CD8-positive, alpha-beta T cell (primary cell): ENCODE measurements at regions of chr17 and their contacts with region 1.

Region 1: GRCh38 chr17:3913531-3914311 is 2.5 kb downstream of the P2RX1 start:
- DNase-seq: peak; percentile 70 to 89 (median 83)
- ATAC-seq: peak; percentile 47
- H3K4me3 ChIP-seq: no peak overlapping the region
- H3K4me3 Mint-ChIP-seq: no peak overlapping the region
- H3K27ac ChIP-seq: peak overlapping the region in 1 of 2 experiments; percentile 16
- H3K27ac Mint-ChIP-seq: peak overlapping the region; percentile 50
- H3K4me1 ChIP-seq: peaks cover 59% of the 10 kb centered on the region
- H3K4me1 Mint-ChIP-seq: peaks cover 65% of the 10 kb centered on the region
- H3K27me3 ChIP-seq: no peaks in the 10 kb centered on the region
- H3K27me3 Mint-ChIP-seq: no peaks in the 10 kb centered on the region
- CTCF ChIP-seq: peak; percentile 94

Region 2: DNA sequence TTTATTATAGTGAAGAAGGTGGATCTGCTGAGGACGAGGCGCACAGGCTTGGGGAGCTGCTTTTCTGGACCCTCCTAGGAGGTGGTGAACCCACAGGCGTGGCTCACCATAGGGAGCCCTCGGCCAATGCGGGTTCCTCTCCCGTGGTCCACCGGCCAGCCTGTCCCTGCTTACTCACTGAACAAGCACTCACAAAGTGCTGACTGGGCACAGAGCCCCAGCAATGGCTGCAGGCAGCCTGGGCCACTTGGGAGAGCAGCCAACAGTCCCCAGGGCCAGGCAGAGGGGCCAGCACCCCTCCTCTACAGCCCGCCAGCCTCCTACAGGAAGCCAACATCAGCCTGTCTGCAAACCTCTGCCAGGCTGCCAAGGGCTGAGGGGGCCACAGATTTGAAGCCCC is 48.5 kb before region 1 on chr17:
- CTCF ChIA-PET with region 1: interaction called, 14 read pairs
- POLR2A ChIA-PET with region 1: no interaction called
- intact Hi-C with region 1: loop called (anchors 5 kb)
- DNase-seq: no peak
- ATAC-seq: no peak
- H3K4me3 ChIP-seq: no peak overlapping the region
- H3K4me3 Mint-ChIP-seq: no peak overlapping the region
- H3K27ac ChIP-seq: no peak overlapping the region
- H3K27ac Mint-ChIP-seq: no peak overlapping the region
- H3K4me1 ChIP-seq: no peaks in the 10 kb centered on the region
- H3K4me1 Mint-ChIP-seq: no peaks in the 10 kb centered on the region
- H3K27me3 ChIP-seq: no peaks in the 10 kb centered on the region
- H3K27me3 Mint-ChIP-seq: no peaks in the 10 kb centered on the region
- CTCF ChIP-seq: no peak

Region 3: GRCh38 chr17:3927628-3928340 is 14.1 kb after region 1 on chr17:
- CTCF ChIA-PET with region 1: interaction called, 11 read pairs
- POLR2A ChIA-PET with region 1: no interaction called
- intact Hi-C with region 1: no loop called
- DNase-seq: no peak
- ATAC-seq: no peak
- H3K4me3 ChIP-seq: no peak overlapping the region
- H3K4me3 Mint-ChIP-seq: no peak overlapping the region
- H3K27ac ChIP-seq: no peak overlapping the region
- H3K27ac Mint-ChIP-seq: peak overlapping the region; percentile 52
- H3K4me1 ChIP-seq: no peaks in the 10 kb centered on the region
- H3K4me1 Mint-ChIP-seq: no peaks in the 10 kb centered on the region
- H3K27me3 ChIP-seq: no peaks in the 10 kb centered on the region
- H3K27me3 Mint-ChIP-seq: no peaks in the 10 kb centered on the region
- CTCF ChIP-seq: no peak

Region 4: DNA sequence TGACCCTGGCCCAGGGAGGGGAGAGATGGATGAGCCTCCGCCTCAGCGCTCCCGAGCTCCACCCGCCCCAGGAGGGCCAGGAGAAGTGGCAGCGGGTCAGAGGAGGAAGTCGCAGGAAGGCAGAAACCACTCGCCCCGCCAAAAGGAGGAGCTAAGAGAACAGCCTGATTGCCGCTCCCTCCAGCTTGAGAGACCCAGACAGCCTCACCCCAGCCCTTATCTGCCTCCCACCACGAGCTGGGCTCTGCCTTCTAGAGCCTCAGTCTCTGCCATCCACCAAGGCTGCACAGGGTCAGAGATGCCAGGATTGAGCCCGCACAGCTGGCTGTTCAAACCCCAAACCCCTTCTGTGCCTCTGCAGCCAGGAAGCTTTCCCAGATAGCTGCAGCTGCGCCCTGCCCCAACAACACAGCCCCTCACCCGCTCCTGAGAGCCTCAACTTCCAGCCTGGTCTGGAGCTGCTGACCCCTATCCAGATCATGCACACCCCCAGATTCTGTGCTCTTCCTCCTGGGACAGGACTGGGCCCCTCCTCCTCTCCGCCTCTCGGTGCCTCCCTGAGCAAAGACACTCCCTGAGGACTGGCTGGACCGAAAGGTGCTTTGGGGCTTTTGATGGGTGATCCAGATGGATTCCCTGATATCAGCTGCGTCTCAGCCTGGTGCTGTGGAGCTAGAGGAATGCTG is 51.5 kb after region 1 on chr17:
- CTCF ChIA-PET with region 1: interaction called, 26 read pairs
- POLR2A ChIA-PET with region 1: interaction called, 10 read pairs
- intact Hi-C with region 1: loop called (anchors 1 to 2 kb)
- DNase-seq: peak; percentile 33 to 81 (median 73)
- ATAC-seq: peak; percentile 51
- H3K4me3 ChIP-seq: peak overlapping the region; percentile 71 to 83
- H3K4me3 Mint-ChIP-seq: peak overlapping the region; percentile 91
- H3K27ac ChIP-seq: peak overlapping the region; percentile 76 to 77
- H3K27ac Mint-ChIP-seq: peak overlapping the region; percentile 94
- H3K4me1 ChIP-seq: peaks cover 39% of the 10 kb centered on the region
- H3K4me1 Mint-ChIP-seq: peaks cover 40% of the 10 kb centered on the region
- H3K27me3 ChIP-seq: no peaks in the 10 kb centered on the region
- H3K27me3 Mint-ChIP-seq: no peaks in the 10 kb centered on the region
- CTCF ChIP-seq: no peak

Region 5: DNA sequence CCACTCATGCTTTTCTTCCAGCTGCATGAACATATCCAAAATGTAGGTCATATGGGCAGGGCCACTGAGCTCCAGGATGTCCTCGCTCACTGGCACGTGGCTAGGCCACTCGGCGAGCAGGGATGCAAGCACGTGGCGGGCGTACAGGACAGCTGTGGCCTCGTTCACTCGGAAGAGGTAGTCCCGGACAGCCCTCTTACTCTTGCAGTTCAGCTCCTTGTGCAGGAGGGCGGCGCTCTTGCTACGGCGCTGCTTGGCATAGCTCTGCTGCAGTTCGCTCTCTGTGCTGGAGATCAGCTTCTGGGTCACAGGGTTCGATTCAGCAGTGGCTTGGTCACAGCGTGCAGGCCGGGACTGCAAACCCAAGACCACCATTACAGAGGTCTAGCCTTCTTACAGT is 103.7 kb after region 1 on chr17:
- CTCF ChIA-PET with region 1: interaction called, 181 read pairs
- POLR2A ChIA-PET with region 1: no interaction called
- intact Hi-C with region 1: no loop called
- DNase-seq: no peak
- ATAC-seq: no peak
- H3K4me3 ChIP-seq: no peak overlapping the region
- H3K4me3 Mint-ChIP-seq: no peak overlapping the region
- H3K27ac ChIP-seq: no peak overlapping the region
- H3K27ac Mint-ChIP-seq: no peak overlapping the region
- H3K4me1 ChIP-seq: no peaks in the 10 kb centered on the region
- H3K4me1 Mint-ChIP-seq: no peaks in the 10 kb centered on the region
- H3K27me3 ChIP-seq: no peaks in the 10 kb centered on the region
- H3K27me3 Mint-ChIP-seq: no peaks in the 10 kb centered on the region
- CTCF ChIP-seq: no peak